PC-9 (cell line): ENCODE measurements at regions of chr20 and their contacts with region 1.

Region 1: DNA sequence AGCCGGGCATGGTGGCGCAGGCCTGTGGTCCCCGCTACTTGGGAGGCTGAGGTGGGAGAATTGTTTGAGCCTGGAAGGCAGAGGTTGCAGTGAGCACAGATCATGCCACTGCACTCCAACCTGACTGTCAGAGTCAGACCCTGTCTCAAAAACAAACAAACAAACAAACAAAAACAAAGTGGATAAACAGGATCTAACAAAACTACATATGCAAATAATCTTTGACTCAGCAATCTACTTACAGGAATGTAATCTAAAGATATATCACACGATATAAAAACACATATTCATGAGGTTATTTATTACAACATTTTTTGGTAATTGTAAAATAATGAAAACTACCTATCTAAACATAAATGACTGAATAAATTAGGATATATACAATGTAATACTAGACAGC is 99.0 kb downstream of the CHD6 start:
- DNase-seq: no peak
- H3K4me3 ChIP-seq: no peak overlapping the region
- H3K27ac ChIP-seq: no peak overlapping the region
- H3K4me1 ChIP-seq: no peaks in the 10 kb centered on the region
- H3K27me3 ChIP-seq: no peaks in the 10 kb centered on the region
- CTCF ChIP-seq: no peak

Region 2: DNA sequence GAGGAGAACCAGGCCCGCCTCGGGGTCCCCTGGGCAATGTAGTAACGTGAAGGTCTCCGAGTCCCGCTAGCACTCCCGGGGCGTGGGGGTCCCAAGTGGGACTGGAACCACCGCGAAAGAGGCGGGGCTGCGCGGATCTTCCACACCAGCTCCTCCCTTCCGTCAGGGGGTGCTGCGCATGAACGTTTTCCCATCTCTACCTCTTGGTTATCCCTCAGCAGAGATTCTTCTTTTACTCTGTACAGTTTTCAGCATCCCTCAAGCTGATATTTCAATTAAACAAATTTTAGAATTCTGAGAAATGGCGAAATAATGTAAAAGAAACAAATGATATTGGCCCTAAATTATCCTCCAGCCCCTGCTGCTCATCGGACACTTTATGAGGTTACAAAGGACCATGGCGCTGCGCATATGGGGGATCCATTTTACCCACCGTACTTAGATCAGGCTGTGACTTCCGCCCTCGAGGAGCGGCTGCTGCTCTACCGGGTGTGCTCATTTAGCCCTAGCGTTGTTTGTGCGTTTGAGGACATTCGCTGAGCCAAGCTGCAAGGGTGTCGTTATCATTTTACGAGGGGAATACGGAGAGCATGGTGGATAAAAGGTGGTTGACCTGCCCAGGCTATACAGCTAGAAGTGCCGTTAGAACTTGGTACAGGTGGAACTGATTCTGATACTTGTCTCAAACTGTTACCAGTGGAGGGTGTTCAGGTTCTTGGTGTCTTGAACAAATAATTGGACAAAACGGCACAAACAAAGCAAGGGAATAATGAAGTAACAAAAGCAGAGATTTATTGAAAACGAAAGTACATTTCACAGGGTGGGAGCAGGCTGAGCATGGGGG is 174.2 kb after region 1 on chr20:
- CTCF ChIA-PET with region 1: no interaction called
- POLR2A ChIA-PET with region 1: no interaction called
- intact Hi-C with region 1: loop called (anchors 5 kb)
- DNase-seq: peak; percentile 76 to 87
- H3K4me3 ChIP-seq: peak overlapping the region; percentile 83
- H3K27ac ChIP-seq: peak overlapping the region; percentile 52
- H3K4me1 ChIP-seq: peaks cover 12% of the 10 kb centered on the region
- H3K27me3 ChIP-seq: peaks cover 15% of the 10 kb centered on the region; the same call in 1 of the 2 replicates
- CTCF ChIP-seq: peak; percentile 66; the same call in 1 of the 2 replicates